ENCODE measurements at regions of chr4 and their contacts with region 1.

Region 1: GRCh38 chr4:85747882-85748491 is 273.0 kb downstream of the ARHGAP24 start:
- DNase-seq: peak in 1 of 3 donors; percentile 69
- ATAC-seq: peak; percentile 84
- H3K4me3 ChIP-seq: no peak overlapping the region
- H3K4me1 ChIP-seq: no peaks in the 10 kb centered on the region
- CTCF ChIP-seq: peak; percentile 63

Region 2: GRCh38 chr4:85147439-85148076 is 600.4 kb before region 1 on chr4:
- intact Hi-C with region 1: loop called in 1 of 2 experiments (anchors 5 kb)
- DNase-seq: peak in 1 of 3 donors; percentile 64
- ATAC-seq: peak; percentile 72
- H3K4me3 ChIP-seq: no peak overlapping the region
- H3K4me1 ChIP-seq: no peaks in the 10 kb centered on the region
- CTCF ChIP-seq: peak; percentile 18

Region 3: GRCh38 chr4:85419103-85419502 is 328.9 kb before region 1 on chr4:
- intact Hi-C with region 1: loop called in 1 of 2 experiments (anchors 5 kb)
- DNase-seq: no peak
- ATAC-seq: no peak
- H3K4me3 ChIP-seq: no peak overlapping the region
- H3K4me1 ChIP-seq: no peaks in the 10 kb centered on the region
- CTCF ChIP-seq: no peak

Measured in mucosa of descending colon (tissue), 3 donors.